ENCODE measurements at regions of chr1 and their contacts with region 1.

Region 1: DNA sequence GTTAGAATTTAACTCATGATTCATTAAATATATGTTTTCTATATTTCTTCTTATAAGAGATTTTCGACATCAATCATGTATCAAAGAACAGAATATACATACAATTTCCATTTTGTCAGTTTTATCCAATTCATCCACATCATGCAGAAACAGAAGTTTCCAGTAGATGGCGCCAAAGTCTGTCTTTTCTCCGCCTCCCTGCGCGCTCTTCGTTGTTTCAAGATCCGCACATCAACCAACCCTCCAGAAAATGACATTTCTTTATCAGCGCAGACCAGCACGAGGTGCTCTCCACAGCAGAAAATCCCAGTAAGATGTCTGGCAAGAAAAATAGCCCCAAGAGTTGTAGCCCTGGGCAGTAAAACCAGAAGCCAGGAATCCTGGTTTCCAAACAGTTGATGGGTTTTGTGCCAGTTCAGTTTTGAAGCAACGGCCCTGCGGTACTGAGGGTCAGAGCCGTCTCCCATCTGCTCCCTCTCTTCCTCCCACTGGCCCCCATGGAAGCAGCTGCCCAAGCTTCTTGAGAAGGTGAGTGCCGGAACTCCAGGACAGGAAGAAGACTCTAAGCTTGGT is 38.6 kb upstream of the GPR137B start:
- DNase-seq: peak; percentile 68
- H3K4me3 ChIP-seq: no peak overlapping the region
- H3K27ac ChIP-seq: no peak overlapping the region
- H3K4me1 ChIP-seq: 0 out of 2 replicates have a peak, but pooled peaks cover 7% of the 10 kb centered on the region
- H3K27me3 ChIP-seq: no peaks in the 10 kb centered on the region

Region 2: GRCh38 chr1:236489710-236490377 is 386.1 kb after region 1 on chr1:
- in situ Hi-C with region 1: loop called (anchors 5 kb)
- DNase-seq: peak; percentile 79
- H3K4me3 ChIP-seq: no peak overlapping the region
- H3K27ac ChIP-seq: no peak overlapping the region
- H3K4me1 ChIP-seq: no peaks in the 10 kb centered on the region
- H3K27me3 ChIP-seq: 0 out of 2 replicates have a peak, but pooled peaks cover 10% of the 10 kb centered on the region

Region 3: DNA sequence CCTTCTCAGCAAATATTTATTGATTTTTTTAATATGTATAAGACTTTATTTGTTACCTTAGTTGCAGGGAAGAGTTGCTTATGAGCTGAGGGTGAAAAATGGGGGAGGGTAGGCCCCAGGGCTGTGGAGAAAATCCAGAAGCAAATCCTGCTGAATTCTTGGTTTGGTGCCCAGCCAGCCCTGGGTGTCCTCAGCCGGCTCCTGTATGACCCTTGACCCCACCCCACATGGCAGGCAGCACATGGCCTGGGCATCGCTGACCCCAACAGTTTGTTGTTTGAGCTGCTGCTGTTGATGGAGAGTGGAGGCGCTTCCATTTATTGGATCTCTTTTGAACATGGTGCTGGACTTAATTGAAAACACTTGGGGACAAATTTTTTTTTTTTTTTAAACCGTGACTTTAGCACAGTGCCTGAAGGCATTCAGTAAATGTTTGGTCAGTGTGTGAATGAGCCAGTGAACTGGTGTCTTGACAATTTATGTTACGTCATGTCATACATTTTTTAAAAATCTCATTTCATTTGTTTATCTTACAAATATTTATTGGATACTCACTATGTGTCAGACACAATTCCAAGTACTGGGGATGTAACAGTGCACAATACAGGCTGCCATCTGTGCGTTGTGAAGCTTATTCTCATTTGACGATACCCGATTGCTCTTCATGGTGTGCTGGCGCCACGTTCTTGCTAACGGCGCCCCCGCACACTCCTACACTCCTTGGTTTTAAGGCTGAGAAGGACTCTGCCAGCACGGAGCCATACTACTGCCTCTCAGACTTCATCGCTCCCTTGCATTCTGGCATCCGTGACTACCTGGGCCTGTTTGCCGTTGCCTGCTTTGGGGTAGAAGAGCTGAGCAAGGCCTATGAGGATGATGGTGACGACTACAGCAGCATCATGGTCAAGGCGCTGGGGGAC is 790.2 kb after region 1 on chr1:
- in situ Hi-C with region 1: loop called (anchors 25 kb)
- DNase-seq: peak; percentile 65
- H3K4me3 ChIP-seq: no peak overlapping the region
- H3K27ac ChIP-seq: no peak overlapping the region
- H3K4me1 ChIP-seq: peaks cover 7% of the 10 kb centered on the region
- H3K27me3 ChIP-seq: no peaks in the 10 kb centered on the region

Region 4: DNA sequence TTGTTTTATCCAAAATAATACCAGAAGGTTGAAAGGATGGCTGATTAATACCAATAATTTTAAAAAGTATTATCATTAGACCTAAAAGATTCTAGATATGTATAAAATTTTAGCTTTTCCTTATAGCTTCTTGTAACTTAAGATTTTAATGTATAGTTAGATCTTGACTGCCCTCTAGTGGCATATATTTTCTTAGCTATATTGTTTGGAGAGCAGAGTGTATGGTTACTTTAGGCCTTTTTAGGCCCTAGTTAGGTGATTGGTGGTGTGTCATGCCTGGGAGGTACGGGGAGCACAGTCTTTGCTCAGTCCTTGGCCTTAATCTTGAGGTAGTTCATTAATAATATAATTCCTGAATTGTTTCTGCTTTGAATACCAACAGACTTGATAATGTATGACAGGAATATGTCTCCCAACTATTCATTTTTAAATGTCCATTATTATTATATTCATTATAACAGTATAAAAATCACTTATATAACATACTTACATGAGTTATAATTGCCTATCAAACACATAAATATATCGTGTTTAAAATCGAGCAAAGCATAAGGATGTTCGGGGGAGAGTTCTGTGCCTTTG is 1458.6 kb after region 1 on chr1:
- in situ Hi-C with region 1: loop called (anchors 25 kb)
- DNase-seq: peak; percentile 73
- H3K4me3 ChIP-seq: no peak overlapping the region
- H3K27ac ChIP-seq: no peak overlapping the region
- H3K4me1 ChIP-seq: no peaks in the 10 kb centered on the region
- H3K27me3 ChIP-seq: no peaks in the 10 kb centered on the region

Measured in GM23248 (cell line).